Endothelial cell of umbilical vein (primary cell): ENCODE measurements at regions of chr16 and their contacts with region 1.

Region 1: DNA sequence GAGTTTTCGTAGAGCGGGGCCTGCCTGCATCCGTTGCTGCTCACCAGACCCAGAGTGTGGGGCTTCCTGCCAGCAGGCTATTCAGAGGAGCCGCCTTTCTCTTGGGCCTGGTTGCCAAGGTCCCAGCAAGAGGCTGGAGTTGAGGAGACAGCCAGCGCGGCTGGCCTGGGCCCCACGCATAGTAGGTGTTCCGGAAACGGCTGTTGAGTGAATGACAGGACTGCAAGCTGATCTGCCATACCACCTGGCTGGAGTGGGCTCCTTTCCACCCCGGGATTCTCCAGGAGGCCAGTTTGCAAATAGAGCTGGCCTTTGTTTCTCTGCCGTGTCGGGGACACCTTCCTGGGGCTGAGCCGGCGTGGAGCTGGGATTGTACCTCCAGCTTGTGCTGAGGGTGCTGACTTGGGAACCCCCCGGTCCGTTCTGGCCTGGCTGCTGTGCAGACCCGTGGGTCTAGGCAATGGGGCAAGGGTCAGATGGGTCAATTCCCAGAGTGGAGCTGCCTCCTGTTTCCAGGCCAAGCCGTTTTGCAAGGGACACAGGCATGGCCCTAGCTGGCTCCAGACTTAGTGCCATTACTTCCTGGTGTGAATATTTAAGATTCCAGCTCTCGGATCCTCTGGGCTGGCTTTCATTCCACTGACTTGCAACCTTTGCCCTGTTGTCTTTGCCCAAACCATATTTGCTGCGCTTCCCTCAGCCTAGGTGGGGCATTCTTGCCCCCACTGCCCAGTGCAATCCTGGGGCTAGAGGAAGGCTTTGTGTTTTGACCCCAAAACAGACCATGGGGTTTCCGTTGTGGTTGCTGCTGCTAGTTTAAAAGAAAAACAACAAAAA is 68.8 kb downstream of the CMIP start:
- DNase-seq: peak; percentile 84
- H3K4me3 ChIP-seq: no peak overlapping the region
- H3K27ac ChIP-seq: peak overlapping the region; percentile 51
- H3K4me1 ChIP-seq: peaks cover 66% of the 10 kb centered on the region
- H3K27me3 ChIP-seq: no peaks in the 10 kb centered on the region
- CTCF ChIP-seq: no peak
- POLR2A ChIP-seq: no peak

Region 2: GRCh38 chr16:80931801-80932712 is 581.4 kb before region 1 on chr16:
- CTCF ChIA-PET with region 1: no interaction called
- POLR2A ChIA-PET with region 1: no interaction called
- dilution Hi-C with region 1: no loop called
- intact Hi-C with region 1: loop called (anchors 10 kb)
- DNase-seq: peak; percentile 59
- H3K4me3 ChIP-seq: peak overlapping the region; percentile 42 to 86 (median 63)
- H3K27ac ChIP-seq: peak overlapping the region; percentile 98
- H3K4me1 ChIP-seq: peaks cover 29% of the 10 kb centered on the region
- H3K27me3 ChIP-seq: no peaks in the 10 kb centered on the region
- CTCF ChIP-seq: peak; percentile 6 to 15
- POLR2A ChIP-seq: peak; percentile 83

Region 3: DNA sequence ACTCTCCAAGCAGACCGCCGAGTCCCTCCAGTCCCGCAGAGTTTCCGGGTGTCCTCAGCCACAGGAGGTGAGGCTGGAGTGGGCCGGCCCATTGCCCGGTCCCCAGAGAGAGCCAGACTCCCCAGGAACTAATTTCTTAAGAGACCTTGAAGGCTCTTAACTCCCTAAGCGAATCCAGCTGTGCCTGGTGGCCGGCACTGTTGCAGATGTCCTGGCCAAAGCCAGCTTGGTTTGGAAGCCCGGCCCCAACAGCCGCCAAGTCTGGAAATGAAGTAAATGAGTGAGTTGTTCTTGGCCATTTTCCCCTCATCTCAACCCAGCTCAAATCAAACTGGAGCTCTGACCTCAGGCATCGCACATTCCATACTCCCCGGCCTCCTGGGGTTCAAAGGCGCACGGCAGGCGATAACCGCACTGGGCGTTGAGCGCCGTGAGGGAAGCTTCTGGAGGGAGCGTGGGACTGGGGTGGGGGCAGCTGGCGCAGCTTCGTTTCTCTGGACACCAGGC is 26.8 kb before region 1 on chr16:
- CTCF ChIA-PET with region 1: interaction called, 12 read pairs
- POLR2A ChIA-PET with region 1: no interaction called
- dilution Hi-C with region 1: no loop called
- intact Hi-C with region 1: no loop called
- DNase-seq: no peak
- H3K4me3 ChIP-seq: no peak overlapping the region
- H3K27ac ChIP-seq: no peak overlapping the region
- H3K4me1 ChIP-seq: peaks cover 25% of the 10 kb centered on the region
- H3K27me3 ChIP-seq: no peaks in the 10 kb centered on the region
- CTCF ChIP-seq: no peak
- POLR2A ChIP-seq: no peak

Region 4: GRCh38 chr16:81500833-81501521 is 12.4 kb before region 1 on chr16:
- CTCF ChIA-PET with region 1: interaction called, 6 read pairs
- POLR2A ChIA-PET with region 1: no interaction called
- dilution Hi-C with region 1: no loop called
- intact Hi-C with region 1: loop called (anchors 1 kb)
- DNase-seq: peak; percentile 85
- H3K4me3 ChIP-seq: no peak overlapping the region
- H3K27ac ChIP-seq: peak overlapping the region; percentile 46
- H3K4me1 ChIP-seq: peaks cover 57% of the 10 kb centered on the region
- H3K27me3 ChIP-seq: no peaks in the 10 kb centered on the region
- CTCF ChIP-seq: no peak
- POLR2A ChIP-seq: no peak

Region 5: GRCh38 chr16:81696961-81697615 is 183.7 kb after region 1 on chr16:
- CTCF ChIA-PET with region 1: no interaction called
- POLR2A ChIA-PET with region 1: no interaction called
- dilution Hi-C with region 1: no loop called
- intact Hi-C with region 1: loop called (anchors 5 kb)
- DNase-seq: peak; percentile 79
- H3K4me3 ChIP-seq: no peak overlapping the region
- H3K27ac ChIP-seq: peak overlapping the region; percentile 98
- H3K4me1 ChIP-seq: peaks cover 62% of the 10 kb centered on the region
- H3K27me3 ChIP-seq: no peaks in the 10 kb centered on the region
- CTCF ChIP-seq: peak; percentile 79 to 84
- POLR2A ChIP-seq: no peak